ENCODE measurements at regions of chr16 and their contacts with region 1.

Region 1: GRCh38 chr16:58152246-58152868 is 23.2 kb upstream of the CFAP20 start:
- DNase-seq: no peak
- H3K4me3 ChIP-seq: no peak overlapping the region
- H3K27ac ChIP-seq: no peak overlapping the region
- H3K4me1 ChIP-seq: no peaks in the 10 kb centered on the region
- H3K27me3 ChIP-seq: no peaks in the 10 kb centered on the region
- CTCF ChIP-seq: no peak
- POLR2A ChIP-seq: no peak

Region 2: GRCh38 chr16:57555831-57556230 is 596.5 kb before region 1 on chr16:
- intact Hi-C with region 1: loop called (anchors 10 kb)
- DNase-seq: no peak
- H3K4me3 ChIP-seq: no peak overlapping the region
- H3K27ac ChIP-seq: no peak overlapping the region
- H3K4me1 ChIP-seq: no peaks in the 10 kb centered on the region
- H3K27me3 ChIP-seq: peaks cover 0 to 15% (median 0%) of the 10 kb centered on the region in 4 donors
- CTCF ChIP-seq: no peak
- POLR2A ChIP-seq: no peak

Region 3: GRCh38 chr16:58225964-58226602 is 73.7 kb after region 1 on chr16:
- intact Hi-C with region 1: no loop called
- DNase-seq: no peak
- H3K4me3 ChIP-seq: no peak overlapping the region
- H3K27ac ChIP-seq: no peak overlapping the region
- H3K4me1 ChIP-seq: peaks cover 0 to 11% (median 0%) of the 10 kb centered on the region in 3 donors
- H3K27me3 ChIP-seq: no peaks in the 10 kb centered on the region
- CTCF ChIP-seq: no peak
- POLR2A ChIP-seq: no peak

Region 4: GRCh38 chr16:58306327-58306726 is 154.0 kb after region 1 on chr16:
- intact Hi-C with region 1: no loop called
- DNase-seq: no peak
- H3K4me3 ChIP-seq: no peak overlapping the region
- H3K27ac ChIP-seq: no peak overlapping the region
- H3K4me1 ChIP-seq: no peaks in the 10 kb centered on the region
- H3K27me3 ChIP-seq: no peaks in the 10 kb centered on the region
- CTCF ChIP-seq: peak in 5 of 6 experiments; percentile 25 to 60 (median 35)
- POLR2A ChIP-seq: no peak

Region 5: DNA sequence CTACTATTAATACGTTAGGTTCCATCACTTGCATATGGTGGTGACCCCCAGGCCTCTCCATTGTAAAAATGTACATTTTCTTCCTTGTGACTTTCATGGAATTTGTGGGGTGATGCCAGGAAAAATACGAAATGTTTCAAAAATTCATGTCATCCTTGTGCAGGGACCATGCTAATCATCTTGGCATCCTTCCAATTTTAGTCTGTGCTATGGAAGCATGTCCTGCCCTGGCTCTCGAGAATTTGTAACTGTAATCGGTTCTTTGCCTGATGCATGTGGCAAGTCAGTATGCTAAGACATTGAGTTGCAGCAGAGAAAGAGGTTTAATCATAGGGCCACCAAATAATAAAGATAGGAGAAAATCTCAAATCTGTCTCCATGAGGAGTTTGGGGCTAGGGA is 225.6 kb after region 1 on chr16:
- intact Hi-C with region 1: no loop called
- DNase-seq: no peak
- H3K4me3 ChIP-seq: no peak overlapping the region
- H3K27ac ChIP-seq: no peak overlapping the region
- H3K4me1 ChIP-seq: no peaks in the 10 kb centered on the region
- H3K27me3 ChIP-seq: no peaks in the 10 kb centered on the region
- CTCF ChIP-seq: no peak
- POLR2A ChIP-seq: no peak

Region 6: DNA sequence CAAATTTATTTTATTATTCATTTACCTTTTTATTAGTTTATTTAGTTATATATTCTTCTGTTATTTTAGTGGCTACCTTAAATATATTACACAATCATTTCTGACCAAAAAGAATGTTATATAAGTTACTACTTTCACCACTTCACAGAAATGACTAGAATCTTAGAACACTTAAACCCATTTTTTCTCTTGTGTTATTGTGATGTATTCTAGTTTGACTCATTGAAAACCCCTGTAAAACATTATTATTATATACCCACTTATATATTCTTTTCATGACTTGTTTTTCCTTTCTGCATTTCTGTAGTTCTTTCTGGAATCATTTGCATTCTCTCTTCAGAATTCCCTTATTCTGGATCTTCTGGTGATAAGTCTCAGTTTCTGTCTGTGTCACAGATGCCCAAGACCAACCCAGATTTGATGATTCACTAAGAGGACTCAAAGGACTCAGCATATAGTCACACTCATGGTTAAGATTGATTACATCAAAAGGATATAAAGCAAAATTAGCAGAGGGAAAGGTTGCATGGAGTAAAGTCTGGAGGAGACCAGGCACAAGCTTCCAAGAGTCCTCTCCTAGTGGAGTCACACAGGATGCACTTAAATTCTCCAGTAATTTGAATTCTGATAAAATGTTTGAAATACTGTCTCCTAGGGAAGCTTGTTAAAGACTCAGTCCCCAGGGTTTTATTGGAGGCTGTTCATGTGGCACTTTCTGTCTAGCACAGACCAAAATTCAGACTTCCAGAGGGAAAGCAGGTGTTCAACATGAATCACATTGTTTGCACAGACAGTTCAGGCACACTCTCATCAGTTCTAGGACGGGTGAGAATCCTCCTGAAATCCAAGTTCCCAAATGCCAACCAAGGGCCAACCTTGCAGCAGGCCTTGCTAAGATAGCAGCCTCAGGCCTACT is 247.6 kb after region 1 on chr16:
- intact Hi-C with region 1: no loop called
- DNase-seq: no peak
- H3K4me3 ChIP-seq: no peak overlapping the region
- H3K27ac ChIP-seq: peak overlapping the region in 2 of 4 donors; percentile 39 to 65
- H3K4me1 ChIP-seq: peaks cover 0 to 9% (median 0%) of the 10 kb centered on the region in 3 donors
- H3K27me3 ChIP-seq: no peaks in the 10 kb centered on the region
- CTCF ChIP-seq: no peak
- POLR2A ChIP-seq: no peak

Measured in esophagus squamous epithelium (tissue), 5 donors.